ENCODE measurements at regions of chr17 and their contacts with region 1.

Region 1: DNA sequence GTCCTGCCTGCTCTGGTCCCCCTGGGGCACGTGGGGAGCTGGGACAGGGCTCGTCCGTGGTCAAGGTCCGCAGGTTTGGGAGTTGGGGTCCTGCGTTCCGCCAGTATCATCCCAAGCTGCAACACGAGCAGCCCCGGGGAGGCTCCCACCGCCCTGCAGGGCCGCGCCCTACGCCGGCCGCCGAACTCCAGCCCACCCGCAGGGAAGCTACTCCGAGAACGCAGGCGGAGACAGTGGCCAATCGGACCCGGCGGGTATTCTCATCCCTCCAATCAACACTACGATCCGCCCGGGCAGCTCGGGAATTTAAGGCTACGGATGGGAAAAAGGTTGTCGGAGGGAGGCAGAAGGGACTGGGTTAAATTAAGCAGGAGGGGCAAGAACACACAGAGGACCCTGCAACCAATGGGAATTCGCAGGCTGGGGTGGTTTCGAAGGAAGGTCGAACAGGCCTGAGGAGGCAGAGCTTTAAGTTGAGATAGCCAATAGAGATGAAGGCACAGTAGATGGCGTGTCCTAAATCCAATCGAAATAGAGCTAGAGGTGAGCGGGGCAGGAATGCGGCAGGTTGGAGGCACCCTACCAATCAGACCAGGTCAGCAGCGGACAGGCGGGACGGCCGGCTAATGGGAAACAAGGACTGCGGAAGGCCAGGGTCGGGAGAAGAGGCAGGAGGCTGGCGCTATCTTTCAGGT is 626 bp downstream of the SPAG7 start:
- DNase-seq: no peak
- ATAC-seq: peak; percentile 87
- H3K4me3 Mint-ChIP-seq: no peak overlapping the region
- H3K27ac Mint-ChIP-seq: no peak overlapping the region
- H3K4me1 Mint-ChIP-seq: peaks cover 18% of the 10 kb centered on the region
- H3K27me3 Mint-ChIP-seq: no peaks in the 10 kb centered on the region
- CTCF ChIP-seq: no peak

Region 2: GRCh38 chr17:4908301-4908700 is 58.7 kb before region 1 on chr17:
- CTCF ChIA-PET with region 1: interaction called, 14 read pairs
- POLR2A ChIA-PET with region 1: interaction called, 11 read pairs
- intact Hi-C with region 1: loop called (anchors 1 kb)
- DNase-seq: no peak
- ATAC-seq: no peak
- H3K4me3 Mint-ChIP-seq: no peak overlapping the region
- H3K27ac Mint-ChIP-seq: no peak overlapping the region
- H3K4me1 Mint-ChIP-seq: peaks cover 4% of the 10 kb centered on the region
- H3K27me3 Mint-ChIP-seq: peaks cover 2% of the 10 kb centered on the region
- CTCF ChIP-seq: no peak

Region 3: GRCh38 chr17:4939796-4940624 is 27.0 kb before region 1 on chr17 and contains the starts of genes RNF167 and SLC25A11:
- CTCF ChIA-PET with region 1: interaction called, 9 read pairs
- POLR2A ChIA-PET with region 1: interaction called, 391 read pairs
- intact Hi-C with region 1: loop called (anchors 1 kb)
- DNase-seq: peak; percentile 93
- ATAC-seq: peak; percentile 84
- H3K4me3 Mint-ChIP-seq: peak within 1 kb of the TSS; percentile 97
- H3K27ac Mint-ChIP-seq: peak within 1 kb of the TSS; percentile 98
- H3K4me1 Mint-ChIP-seq: peaks cover 69% of the 10 kb centered on the region
- H3K27me3 Mint-ChIP-seq: no peaks in the 10 kb centered on the region
- CTCF ChIP-seq: no peak
- total RNA-seq, gene RNF167: 93.3 and 108 TPM in 2 replicates
- total RNA-seq, gene SLC25A11: 35.3 and 35.8 TPM in 2 replicates

Region 4: GRCh38 chr17:4986951-4987766 is 20.2 kb after region 1 on chr17 and contains the start of gene CAMTA2:
- CTCF ChIA-PET with region 1: interaction called, 17 read pairs
- POLR2A ChIA-PET with region 1: interaction called, 44 read pairs
- intact Hi-C with region 1: loop called (anchors 1 kb)
- DNase-seq: peak; percentile 88
- ATAC-seq: peak; percentile 80
- H3K4me3 Mint-ChIP-seq: peak within 1 kb of the TSS; percentile 92
- H3K27ac Mint-ChIP-seq: peak within 1 kb of the TSS; percentile 93
- H3K4me1 Mint-ChIP-seq: peaks cover 32% of the 10 kb centered on the region
- H3K27me3 Mint-ChIP-seq: no peaks in the 10 kb centered on the region
- CTCF ChIP-seq: no peak
- total RNA-seq, gene CAMTA2: 45.9 and 57.9 TPM in 2 replicates

Region 5: DNA sequence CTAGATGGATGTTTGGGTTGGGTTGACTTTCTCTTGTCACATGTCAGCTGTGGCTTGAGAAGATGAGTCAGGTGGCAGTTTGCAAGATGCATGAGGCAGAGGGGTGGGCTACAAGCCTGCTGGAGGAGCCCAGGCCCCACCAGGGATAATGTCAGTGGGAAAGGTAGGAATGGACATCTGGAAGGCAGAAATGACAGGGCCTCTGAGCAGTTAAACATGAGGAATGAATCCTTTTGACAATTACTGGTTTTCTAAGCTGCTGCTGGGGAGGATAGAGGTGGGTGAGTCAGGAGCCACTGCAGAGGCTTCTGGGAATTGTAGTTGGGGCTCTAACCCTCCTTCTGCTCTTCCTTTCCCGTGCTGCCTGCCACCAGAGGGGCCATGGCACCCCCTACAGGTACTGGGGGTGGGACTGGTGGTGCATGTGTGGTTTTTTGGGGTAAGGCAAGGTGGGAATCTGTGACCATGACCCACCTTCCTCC is 52.5 kb after region 1 on chr17:
- CTCF ChIA-PET with region 1: no interaction called
- POLR2A ChIA-PET with region 1: interaction called, 27 read pairs
- intact Hi-C with region 1: loop called (anchors 1 kb)
- DNase-seq: peak; percentile 31
- ATAC-seq: peak; percentile 49
- H3K4me3 Mint-ChIP-seq: no peak overlapping the region
- H3K27ac Mint-ChIP-seq: peak overlapping the region; percentile 32
- H3K4me1 Mint-ChIP-seq: peaks cover 28% of the 10 kb centered on the region
- H3K27me3 Mint-ChIP-seq: no peaks in the 10 kb centered on the region
- CTCF ChIP-seq: no peak

Region 6: DNA sequence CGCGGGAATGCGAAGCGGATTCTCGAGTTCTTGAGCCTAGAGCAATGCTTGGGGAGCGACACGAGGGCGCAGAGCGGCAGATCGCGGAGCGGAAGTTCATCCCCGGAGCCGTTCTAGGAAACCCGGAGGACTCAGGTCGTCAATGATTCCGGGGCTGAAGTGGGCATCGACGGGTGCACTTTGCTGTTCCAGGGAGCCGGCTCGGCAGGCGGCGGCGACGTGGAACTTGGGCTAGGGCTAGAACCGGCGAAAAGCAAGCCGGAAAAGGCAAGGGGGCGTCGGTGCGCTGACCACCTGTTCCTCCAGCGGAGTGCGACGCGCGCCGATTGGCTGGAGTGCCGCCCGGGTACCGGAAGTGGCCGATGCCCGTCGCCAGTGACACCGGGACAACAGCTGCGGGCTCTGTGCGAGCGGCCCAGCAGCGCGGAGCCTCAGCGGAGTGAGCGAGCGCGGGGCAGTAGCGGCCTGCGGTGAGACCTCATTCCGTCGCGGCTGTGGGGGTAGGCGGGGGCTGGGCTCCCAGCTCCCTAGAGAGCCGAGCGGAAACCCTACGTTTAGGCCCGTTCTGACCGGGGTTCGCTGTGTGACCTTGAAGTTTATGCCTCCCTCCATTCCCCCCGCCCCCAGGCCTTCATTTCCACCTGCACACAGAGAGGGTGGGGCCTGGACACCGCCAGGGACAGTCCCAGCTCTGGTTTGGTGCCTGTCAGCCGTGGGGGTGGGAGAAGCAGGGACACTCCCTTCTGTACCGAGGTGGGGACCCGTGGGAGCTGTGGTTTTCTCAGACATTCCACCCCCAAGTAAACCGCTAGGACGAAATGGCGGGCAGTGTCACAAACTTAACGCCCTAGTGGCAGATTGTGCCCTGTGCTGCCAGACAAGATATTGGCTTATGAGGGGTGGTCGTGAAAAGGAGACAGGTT is 111.4 kb after region 1 on chr17 and contains the start of gene ZFP3:
- CTCF ChIA-PET with region 1: no interaction called
- POLR2A ChIA-PET with region 1: interaction called, 13 read pairs
- intact Hi-C with region 1: loop called (anchors 5 kb)
- DNase-seq: peak; percentile 80
- ATAC-seq: peak; percentile 88
- H3K4me3 Mint-ChIP-seq: peak within 1 kb of the TSS; percentile 83
- H3K27ac Mint-ChIP-seq: peak within 1 kb of the TSS; percentile 96
- H3K4me1 Mint-ChIP-seq: peaks cover 31% of the 10 kb centered on the region
- H3K27me3 Mint-ChIP-seq: no peaks in the 10 kb centered on the region
- CTCF ChIP-seq: no peak
- total RNA-seq, gene ZFP3: 10.1 and 11.5 TPM in 2 replicates

Measured in activated B cell treated with CpG ODN at 0.5 μM for 24 hours (primary cell).